A549 (cell line): ENCODE measurements at regions of chr17 and their contacts with region 1.

Region 1: DNA sequence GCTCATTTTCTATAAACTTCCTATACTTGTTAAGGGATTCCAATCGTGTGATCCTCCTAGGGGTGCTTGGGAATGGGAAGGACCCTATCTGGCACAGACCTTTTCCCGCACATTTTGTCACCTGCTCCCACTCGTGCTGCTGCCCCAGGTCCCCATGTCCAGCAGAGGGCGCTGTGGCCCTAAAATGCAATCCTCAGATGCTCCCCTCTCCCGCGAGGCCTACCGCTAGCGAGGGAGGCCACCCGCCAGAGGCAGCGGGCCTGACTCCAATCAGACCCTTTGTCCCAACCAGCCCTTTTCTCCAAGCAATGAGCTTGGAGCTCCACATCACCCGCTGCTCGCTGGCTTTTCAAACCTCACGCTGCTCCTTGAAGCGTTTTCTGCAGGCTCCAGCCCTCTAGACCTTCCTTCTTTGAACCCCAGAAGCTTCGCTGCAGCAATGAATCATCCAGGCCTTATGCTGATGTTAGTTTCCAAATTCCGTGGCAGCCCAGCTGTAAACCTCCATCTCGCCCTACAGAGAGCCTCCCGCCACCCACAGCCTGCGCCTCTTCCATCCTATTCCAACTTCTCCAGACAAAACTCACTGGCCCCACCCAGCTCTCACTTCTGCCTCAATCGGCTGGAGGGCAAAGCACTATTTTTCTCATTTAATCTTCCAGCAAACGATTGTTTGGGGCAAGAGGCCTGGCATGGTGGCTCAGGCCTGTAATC is 23.6 kb upstream of the FZD2 start:
- DNase-seq: peak; percentile 93 to 99
- ATAC-seq: peak; percentile 91 to 95
- H3K4me3 ChIP-seq: no peak overlapping the region
- H3K27ac ChIP-seq: peak overlapping the region; percentile 92 to 93
- H3K4me1 ChIP-seq: peaks cover 37% of the 10 kb centered on the region
- CTCF ChIP-seq: peak; percentile 99
- EP300 ChIP-seq: no peak
- POLR2A ChIP-seq: no peak
- RAD21 ChIP-seq: peak; percentile 100

Region 2: DNA sequence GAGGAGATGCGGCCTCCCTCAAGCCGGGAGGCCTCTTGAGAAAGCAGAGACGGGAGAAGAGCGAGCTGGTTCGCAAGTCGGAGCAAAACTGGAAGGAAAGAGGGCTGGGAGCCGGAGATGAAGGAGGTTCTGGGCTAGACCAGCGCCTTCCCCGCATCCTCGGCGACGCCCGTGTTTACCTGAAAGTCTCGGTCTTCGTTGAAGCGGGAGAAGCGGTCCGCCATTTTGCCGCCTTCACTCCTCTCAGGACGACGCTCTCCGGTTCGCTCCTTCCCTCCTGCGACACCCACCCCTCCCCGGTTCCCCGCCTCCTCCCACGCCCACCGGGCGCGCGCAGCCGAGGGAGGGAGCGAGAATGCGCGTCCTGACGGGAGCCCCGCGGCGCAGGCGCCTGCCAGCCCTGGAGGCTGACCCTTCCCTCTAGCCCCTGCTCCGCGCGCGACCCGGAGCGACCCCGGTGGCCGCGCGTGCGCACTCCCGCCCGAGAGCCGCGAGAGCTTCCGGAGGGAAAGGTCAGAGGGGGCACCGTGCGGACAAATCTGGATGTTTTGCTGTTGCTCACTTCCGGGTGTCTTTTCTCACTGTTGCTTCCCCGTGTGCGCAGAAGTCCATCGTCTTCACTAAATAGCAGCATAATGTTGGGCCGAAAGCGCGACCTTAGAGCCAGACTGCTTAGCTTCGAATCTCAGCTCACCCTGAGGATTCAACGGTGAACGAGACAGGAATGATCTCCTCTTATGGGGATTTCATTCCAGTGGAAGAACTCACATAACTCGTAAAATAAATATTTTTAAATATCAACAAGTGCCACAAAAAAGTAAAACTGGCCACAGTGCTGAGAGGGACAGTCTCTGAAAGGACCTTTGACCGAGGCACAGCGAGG is 30.3 kb before region 1 on chr17 and contains the start of gene GPATCH8:
- CTCF ChIA-PET with region 1: interaction called, 18 read pairs
- POLR2A ChIA-PET with region 1: interaction called, 3 read pairs
- DNase-seq: peak; percentile 99
- ATAC-seq: peak; percentile 95 to 98
- H3K4me3 ChIP-seq: peak within 1 kb of the TSS; percentile 80
- H3K27ac ChIP-seq: peak within 1 kb of the TSS; percentile 85 to 95
- H3K4me1 ChIP-seq: peaks cover 38% of the 10 kb centered on the region; the same call in 2 of the 3 replicates
- CTCF ChIP-seq: no peak
- EP300 ChIP-seq: no peak
- POLR2A ChIP-seq: peak; percentile 77
- RAD21 ChIP-seq: no peak
- polyA plus RNA-seq, gene GPATCH8: 24.9 and 27.3 TPM in 2 replicates

Region 3: DNA sequence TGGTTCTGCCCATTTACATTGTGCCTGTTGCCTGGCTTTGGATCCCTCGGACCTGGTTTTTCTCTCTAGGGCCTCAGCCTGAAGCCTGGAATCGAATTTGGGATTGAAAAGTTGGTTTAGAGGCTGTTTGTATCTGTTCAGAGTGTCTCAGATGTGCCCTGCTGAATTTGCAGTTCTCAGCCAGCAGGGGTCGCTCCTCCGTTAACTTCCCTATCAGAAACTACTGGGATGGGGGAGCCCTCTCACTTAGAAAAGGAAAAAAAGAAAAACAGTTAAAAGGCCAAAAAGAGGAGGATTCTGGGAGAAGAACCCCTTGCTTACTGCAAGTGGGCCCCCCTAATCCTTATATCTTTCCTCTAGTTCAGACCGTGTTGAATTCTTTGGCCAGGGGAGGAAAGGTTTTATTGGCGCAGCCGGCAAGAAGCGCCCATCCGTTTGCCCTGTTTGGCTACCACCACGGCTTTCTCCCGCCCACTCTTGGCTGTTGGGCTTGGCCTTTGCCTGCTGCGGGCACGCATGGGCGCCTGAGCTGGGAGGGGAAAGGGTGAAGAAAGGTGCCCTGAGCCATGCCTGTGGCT is 32.3 kb after region 1 on chr17:
- CTCF ChIA-PET with region 1: interaction called, 63 read pairs
- POLR2A ChIA-PET with region 1: interaction called, 3 read pairs
- DNase-seq: no peak
- ATAC-seq: no peak
- H3K4me3 ChIP-seq: no peak overlapping the region
- H3K27ac ChIP-seq: peak overlapping the region in 1 of 2 experiments; percentile 29; a peak in 1 of 6 replicates
- H3K4me1 ChIP-seq: peaks cover 14% of the 10 kb centered on the region
- CTCF ChIP-seq: peak; percentile 43
- EP300 ChIP-seq: no peak
- POLR2A ChIP-seq: no peak
- RAD21 ChIP-seq: peak in 1 of 2 experiments; percentile 55; a peak in 3 of 5 replicates

Region 4: GRCh38 chr17:44599298-44600175 is 65.8 kb after region 1 on chr17:
- CTCF ChIA-PET with region 1: interaction called, 66 read pairs
- POLR2A ChIA-PET with region 1: no interaction called
- DNase-seq: peak; percentile 87 to 93
- ATAC-seq: peak; percentile 90 to 95
- H3K4me3 ChIP-seq: no peak overlapping the region
- H3K27ac ChIP-seq: peak overlapping the region; percentile 86 to 88
- H3K4me1 ChIP-seq: peaks cover 50% of the 10 kb centered on the region
- CTCF ChIP-seq: no peak
- EP300 ChIP-seq: no peak
- POLR2A ChIP-seq: no peak
- RAD21 ChIP-seq: peak; percentile 14 to 32; a peak in 4 of 5 replicates

Region 5: DNA sequence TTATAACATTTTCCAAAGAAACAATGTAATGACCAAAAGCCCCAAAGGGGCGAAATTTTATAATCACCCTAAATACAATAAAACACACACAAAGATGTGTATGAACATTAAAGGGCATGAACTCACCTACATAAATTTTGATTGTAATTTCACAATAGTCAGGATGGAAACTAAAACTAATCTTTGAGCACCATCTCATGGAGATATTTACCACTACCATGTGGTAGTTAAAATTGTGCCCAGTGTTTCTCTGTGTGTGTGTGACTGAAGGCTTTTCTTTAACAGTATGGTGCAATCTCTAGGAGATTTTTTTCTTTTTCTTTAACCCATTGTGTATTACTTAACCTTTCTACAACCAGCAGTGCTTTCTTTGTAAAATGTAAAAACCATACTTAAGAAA is 102.9 kb after region 1 on chr17:
- CTCF ChIA-PET with region 1: interaction called, 324 read pairs
- POLR2A ChIA-PET with region 1: no interaction called
- DNase-seq: peak; percentile 67 to 69
- ATAC-seq: peak; percentile 88 to 94
- H3K4me3 ChIP-seq: no peak overlapping the region
- H3K27ac ChIP-seq: peak overlapping the region in 1 of 2 experiments; percentile 1; a peak in 1 of 6 replicates
- H3K4me1 ChIP-seq: peaks cover 22% of the 10 kb centered on the region
- CTCF ChIP-seq: peak; percentile 97
- EP300 ChIP-seq: no peak
- POLR2A ChIP-seq: no peak
- RAD21 ChIP-seq: peak; percentile 99

Region 6: GRCh38 chr17:44672479-44673093 is 138.9 kb after region 1 on chr17:
- CTCF ChIA-PET with region 1: interaction called, 45 read pairs
- POLR2A ChIA-PET with region 1: no interaction called
- DNase-seq: peak; percentile 42 to 60
- ATAC-seq: peak; percentile 66 to 70; a peak in 3 of 6 replicates
- H3K4me3 ChIP-seq: no peak overlapping the region
- H3K27ac ChIP-seq: no peak overlapping the region
- H3K4me1 ChIP-seq: no peaks in the 10 kb centered on the region
- CTCF ChIP-seq: peak; percentile 74
- EP300 ChIP-seq: no peak
- POLR2A ChIP-seq: no peak
- RAD21 ChIP-seq: peak; percentile 61 to 76